ENCODE measurements at regions of chr4 and their contacts with region 1.

Region 1: DNA sequence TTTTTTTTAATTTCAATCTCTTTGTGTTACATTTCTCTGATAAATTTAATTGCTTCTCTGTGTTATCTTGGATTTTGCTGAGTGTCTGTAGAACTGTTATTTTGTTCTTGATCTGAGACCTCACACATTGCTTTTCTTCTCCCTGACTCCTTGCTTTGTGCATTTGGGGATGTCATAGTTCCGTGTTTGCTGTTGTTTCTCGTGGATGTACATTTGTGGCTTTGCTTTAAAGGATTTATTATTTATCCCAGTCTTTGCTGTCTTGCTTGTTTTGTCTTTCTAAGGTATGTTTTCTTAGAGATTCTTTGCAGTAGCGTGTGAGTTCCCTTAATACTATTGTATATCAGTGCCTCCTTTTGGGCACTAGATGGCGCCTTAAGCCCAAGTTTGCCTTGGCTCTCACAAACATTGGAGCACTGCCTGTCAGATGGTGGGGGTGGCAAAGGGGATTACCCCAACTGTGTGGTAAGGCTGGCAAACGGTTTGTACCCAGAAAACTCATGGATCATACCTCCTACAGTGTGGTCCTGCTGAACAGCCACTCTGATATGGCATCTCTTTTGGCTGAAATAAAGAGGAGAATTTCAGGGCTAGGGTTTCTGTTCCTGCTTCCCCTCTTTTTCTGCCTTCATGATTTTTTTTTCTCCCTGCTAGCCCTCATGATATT is 96.4 kb downstream of the PGRMC2 start:
- DNase-seq: peak; percentile 48 to 86 (median 58)
- ATAC-seq: peak; percentile 100
- H3K4me3 ChIP-seq: no peak overlapping the region
- H3K4me3 Mint-ChIP-seq: no peak overlapping the region
- H3K27ac ChIP-seq: no peak overlapping the region
- H3K27ac Mint-ChIP-seq: no peak overlapping the region
- H3K4me1 ChIP-seq: no peaks in the 10 kb centered on the region
- H3K4me1 Mint-ChIP-seq: no peaks in the 10 kb centered on the region
- H3K27me3 ChIP-seq: no peaks in the 10 kb centered on the region
- H3K27me3 Mint-ChIP-seq: no peaks in the 10 kb centered on the region
- CTCF ChIP-seq: peak; percentile 96

Region 2: DNA sequence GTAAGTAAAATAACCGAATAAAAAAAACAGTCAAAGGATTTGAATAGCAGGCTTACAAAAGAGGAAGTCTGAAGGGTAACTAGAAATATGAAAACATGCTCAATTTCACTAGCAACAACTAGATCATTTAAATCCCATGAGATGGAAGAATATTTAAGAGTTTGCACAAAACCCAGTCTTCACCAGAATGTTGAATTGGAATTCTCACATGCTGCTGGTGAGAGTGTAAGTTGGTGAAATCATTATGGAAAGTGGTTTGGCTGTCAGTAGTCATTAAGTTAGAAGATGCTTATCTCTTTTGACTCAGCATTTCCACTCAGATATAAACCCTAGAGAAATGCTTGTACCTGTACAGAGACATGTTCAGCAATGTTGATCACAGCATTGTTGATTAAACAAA is 13.8 kb before region 1 on chr4:
- CTCF ChIA-PET with region 1: no interaction called
- POLR2A ChIA-PET with region 1: no interaction called
- intact Hi-C with region 1: no loop called
- DNase-seq: no peak
- ATAC-seq: no peak
- H3K4me3 ChIP-seq: no peak overlapping the region
- H3K4me3 Mint-ChIP-seq: no peak overlapping the region
- H3K27ac ChIP-seq: no peak overlapping the region
- H3K27ac Mint-ChIP-seq: no peak overlapping the region
- H3K4me1 ChIP-seq: no peaks in the 10 kb centered on the region
- H3K4me1 Mint-ChIP-seq: no peaks in the 10 kb centered on the region
- H3K27me3 ChIP-seq: no peaks in the 10 kb centered on the region
- H3K27me3 Mint-ChIP-seq: no peaks in the 10 kb centered on the region
- CTCF ChIP-seq: no peak

Region 3: GRCh38 chr4:128298852-128299251 is 107.6 kb after region 1 on chr4:
- CTCF ChIA-PET with region 1: no interaction called
- POLR2A ChIA-PET with region 1: no interaction called
- intact Hi-C with region 1: loop called in 1 of 2 experiments (anchors 1 kb)
- DNase-seq: peak in 2 of 14 experiments; percentile 13 to 36
- ATAC-seq: peak; percentile 82
- H3K4me3 ChIP-seq: no peak overlapping the region
- H3K4me3 Mint-ChIP-seq: no peak overlapping the region
- H3K27ac ChIP-seq: no peak overlapping the region
- H3K27ac Mint-ChIP-seq: no peak overlapping the region
- H3K4me1 ChIP-seq: no peaks in the 10 kb centered on the region
- H3K4me1 Mint-ChIP-seq: no peaks in the 10 kb centered on the region
- H3K27me3 ChIP-seq: no peaks in the 10 kb centered on the region
- H3K27me3 Mint-ChIP-seq: no peaks in the 10 kb centered on the region
- CTCF ChIP-seq: no peak

Region 4: GRCh38 chr4:128574706-128575105 is 383.5 kb after region 1 on chr4:
- CTCF ChIA-PET with region 1: no interaction called
- POLR2A ChIA-PET with region 1: no interaction called
- intact Hi-C with region 1: loop called in 1 of 2 experiments (anchors 10 kb)
- DNase-seq: peak; percentile 25 to 74 (median 50)
- ATAC-seq: peak; percentile 56
- H3K4me3 ChIP-seq: no peak overlapping the region
- H3K4me3 Mint-ChIP-seq: no peak overlapping the region
- H3K27ac ChIP-seq: no peak overlapping the region
- H3K27ac Mint-ChIP-seq: no peak overlapping the region
- H3K4me1 ChIP-seq: no peaks in the 10 kb centered on the region
- H3K4me1 Mint-ChIP-seq: no peaks in the 10 kb centered on the region
- H3K27me3 ChIP-seq: peaks cover 0 to 3% of the 10 kb centered on the region in 2 experiments
- H3K27me3 Mint-ChIP-seq: peaks cover 16% of the 10 kb centered on the region
- CTCF ChIP-seq: peak; percentile 51

Region 5: GRCh38 chr4:129641179-129641578 is 1449.9 kb after region 1 on chr4:
- CTCF ChIA-PET with region 1: no interaction called
- POLR2A ChIA-PET with region 1: no interaction called
- intact Hi-C with region 1: loop called in 1 of 2 experiments (anchors 2 kb)
- DNase-seq: peak in 12 of 14 experiments; percentile 1 to 48 (median 15)
- ATAC-seq: no peak
- H3K4me3 ChIP-seq: no peak overlapping the region
- H3K4me3 Mint-ChIP-seq: no peak overlapping the region
- H3K27ac ChIP-seq: no peak overlapping the region
- H3K27ac Mint-ChIP-seq: no peak overlapping the region
- H3K4me1 ChIP-seq: no peaks in the 10 kb centered on the region
- H3K4me1 Mint-ChIP-seq: no peaks in the 10 kb centered on the region
- H3K27me3 ChIP-seq: no peaks in the 10 kb centered on the region
- H3K27me3 Mint-ChIP-seq: no peaks in the 10 kb centered on the region
- CTCF ChIP-seq: peak; percentile 66